ENCODE measurements at regions of chr7 and their contacts with region 1.

Region 1: GRCh38 chr7:23445326-23445725 is 25.0 kb downstream of the IGF2BP3 start:
- DNase-seq: no peak
- H3K4me3 ChIP-seq: no peak overlapping the region
- H3K4me3 Mint-ChIP-seq: no peak overlapping the region
- H3K27ac Mint-ChIP-seq: no peak overlapping the region
- H3K4me1 ChIP-seq: no peaks in the 10 kb centered on the region; the same call in 1 of the 2 replicates
- H3K4me1 Mint-ChIP-seq: no peaks in the 10 kb centered on the region
- H3K27me3 ChIP-seq: no peaks in the 10 kb centered on the region
- H3K27me3 Mint-ChIP-seq: no peaks in the 10 kb centered on the region
- CTCF ChIP-seq: no peak

Region 2: DNA sequence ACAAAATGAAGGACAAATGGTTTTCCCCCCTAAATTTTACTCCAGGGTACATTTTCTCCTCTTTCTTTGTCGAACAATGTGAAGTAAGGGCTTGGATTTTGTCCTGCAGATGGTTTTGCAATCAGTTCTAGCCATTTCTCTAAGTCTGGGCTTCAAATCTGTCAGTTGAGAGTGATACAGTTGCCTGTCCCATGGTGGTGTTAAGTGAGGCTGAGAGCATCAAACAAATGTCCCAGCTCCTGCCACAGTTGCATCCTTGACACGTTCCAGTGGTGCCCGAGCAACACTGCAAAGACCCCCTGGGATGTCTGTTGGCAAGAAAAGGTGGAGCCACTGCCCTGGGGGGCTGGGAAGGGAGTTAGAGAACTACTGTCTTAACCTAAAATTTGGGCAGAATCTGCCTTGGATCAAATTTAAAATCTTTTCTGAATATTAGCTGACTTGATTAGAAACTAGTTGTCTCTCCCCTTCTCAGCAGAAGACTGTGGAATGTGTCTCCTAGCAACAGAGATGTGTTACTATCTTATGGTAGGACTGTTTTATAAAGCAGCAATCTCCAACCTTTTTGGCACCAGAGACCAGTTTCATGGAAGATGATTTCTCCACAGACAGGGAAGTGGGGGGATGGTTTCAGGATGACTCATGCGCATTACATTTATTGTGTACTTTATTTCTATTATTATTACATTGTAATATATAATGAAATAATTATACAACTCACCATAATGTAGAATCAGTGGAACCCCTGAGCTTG is 843.3 kb before region 1 on chr7:
- CTCF ChIA-PET with region 1: no interaction called
- POLR2A ChIA-PET with region 1: no interaction called
- intact Hi-C with region 1: no loop called
- DNase-seq: no peak
- H3K4me3 ChIP-seq: no peak overlapping the region
- H3K4me3 Mint-ChIP-seq: no peak overlapping the region
- H3K27ac Mint-ChIP-seq: no peak overlapping the region
- H3K4me1 ChIP-seq: no peaks in the 10 kb centered on the region
- H3K4me1 Mint-ChIP-seq: peaks cover 5% of the 10 kb centered on the region
- H3K27me3 ChIP-seq: no peaks in the 10 kb centered on the region
- H3K27me3 Mint-ChIP-seq: no peaks in the 10 kb centered on the region
- CTCF ChIP-seq: no peak

Region 3: GRCh38 chr7:23462846-23463245 is 17.5 kb after region 1 on chr7:
- CTCF ChIA-PET with region 1: interaction called, 3 read pairs
- POLR2A ChIA-PET with region 1: interaction called, 3 read pairs
- intact Hi-C with region 1: loop called (anchors 2 kb)
- DNase-seq: peak in 1 of 2 experiments; percentile 35
- H3K4me3 ChIP-seq: no peak overlapping the region
- H3K4me3 Mint-ChIP-seq: peak overlapping the region; percentile 72
- H3K27ac Mint-ChIP-seq: peak overlapping the region; percentile 12
- H3K4me1 ChIP-seq: peaks cover 44% of the 10 kb centered on the region
- H3K4me1 Mint-ChIP-seq: peaks cover 37% of the 10 kb centered on the region
- H3K27me3 ChIP-seq: no peaks in the 10 kb centered on the region
- H3K27me3 Mint-ChIP-seq: no peaks in the 10 kb centered on the region
- CTCF ChIP-seq: no peak

Measured in Caco-2 (cell line).